H1 (cell line): ENCODE measurements at regions of chr12 and their contacts with region 1.

Region 1: GRCh38 chr12:89352492-89353187 is at the start of gene DUSP6:
- DNase-seq: peak; percentile 93 to 96
- H3K4me3 ChIP-seq: peak within 1 kb of the TSS; percentile 49 to 85 (median 83)
- H3K27ac ChIP-seq: peak within 1 kb of the TSS; percentile 82
- H3K4me1 ChIP-seq: peaks cover 19 to 27% (median 21%) of the 10 kb centered on the region in 4 experiments
- H3K27me3 ChIP-seq: peaks cover 8 to 54% (median 31%) of the 10 kb centered on the region in 4 experiments
- CTCF ChIP-seq: no peak
- EP300 ChIP-seq: peak; percentile 18 to 81; a peak in 2 of 3 replicates
- POLR2A ChIP-seq: peak; percentile 90 to 92
- RAD21 ChIP-seq: peak in 1 of 2 experiments; percentile 1; a peak in 2 of 4 replicates
- total RNA-seq, gene DUSP6: 152 and 179 TPM in 2 replicates

Region 2: GRCh38 chr12:89098441-89099112 is 254.1 kb before region 1 on chr12:
- CTCF ChIA-PET with region 1: interaction called, 3 read pairs
- POLR2A ChIA-PET with region 1: interaction called, 16 read pairs
- DNase-seq: peak; percentile 53 to 70
- H3K4me3 ChIP-seq: peak overlapping the region in 3 of 4 experiments; percentile 11 to 42 (median 19); a peak in 5 of 8 replicates
- H3K27ac ChIP-seq: 0 out of 2 replicates have a peak overlapping the region, but pooled peaks have one; percentile 5
- H3K4me1 ChIP-seq: peaks cover 7 to 27% (median 19%) of the 10 kb centered on the region in 4 experiments
- H3K27me3 ChIP-seq: no peaks in the 10 kb centered on the region
- CTCF ChIP-seq: no peak
- EP300 ChIP-seq: peak in 1 of 2 experiments; percentile 78; a peak in 2 of 3 replicates
- POLR2A ChIP-seq: no peak
- RAD21 ChIP-seq: peak in 1 of 2 experiments; percentile 22; a peak in 1 of 4 replicates

Region 3: DNA sequence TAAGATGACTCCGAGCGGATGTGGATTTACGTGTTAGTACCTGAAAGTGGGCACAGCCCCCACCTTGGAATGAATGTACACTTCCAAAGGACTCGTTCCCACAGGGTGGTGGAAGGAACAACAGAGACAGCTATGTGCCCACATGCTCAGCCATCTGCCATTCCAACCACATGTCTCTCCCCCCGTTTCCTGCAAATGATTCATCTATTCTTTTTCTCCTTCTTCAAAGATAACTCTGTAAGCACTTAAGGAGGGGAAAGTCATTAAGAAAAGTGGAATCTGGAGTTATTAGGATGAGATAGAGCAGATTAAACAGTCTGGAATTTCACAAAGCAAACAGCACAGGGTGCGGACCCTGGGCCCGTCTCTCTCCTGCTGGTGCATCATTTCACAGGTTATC is 18.2 kb after region 1 on chr12:
- CTCF ChIA-PET with region 1: interaction called, 5 read pairs
- POLR2A ChIA-PET with region 1: interaction called, 11 read pairs
- DNase-seq: no peak
- H3K4me3 ChIP-seq: no peak overlapping the region
- H3K27ac ChIP-seq: no peak overlapping the region
- H3K4me1 ChIP-seq: peaks cover 0 to 4% (median 0%) of the 10 kb centered on the region in 4 experiments; a peak in 1 of 7 replicates
- H3K27me3 ChIP-seq: no peaks in the 10 kb centered on the region
- CTCF ChIP-seq: no peak
- EP300 ChIP-seq: peak in 1 of 2 experiments; percentile 46; a peak in 1 of 3 replicates
- POLR2A ChIP-seq: no peak
- RAD21 ChIP-seq: no peak

Region 4: GRCh38 chr12:89393551-89394121 is 41.0 kb after region 1 on chr12:
- CTCF ChIA-PET with region 1: no interaction called
- POLR2A ChIA-PET with region 1: interaction called, 17 read pairs
- DNase-seq: no peak
- H3K4me3 ChIP-seq: no peak overlapping the region
- H3K27ac ChIP-seq: no peak overlapping the region
- H3K4me1 ChIP-seq: no peaks in the 10 kb centered on the region
- H3K27me3 ChIP-seq: no peaks in the 10 kb centered on the region
- CTCF ChIP-seq: no peak
- EP300 ChIP-seq: no peak
- POLR2A ChIP-seq: no peak
- RAD21 ChIP-seq: no peak

Region 5: GRCh38 chr12:89542912-89543592 is 190.4 kb after region 1 on chr12:
- CTCF ChIA-PET with region 1: no interaction called
- POLR2A ChIA-PET with region 1: no interaction called
- DNase-seq: peak; percentile 53 to 79
- H3K4me3 ChIP-seq: no peak overlapping the region
- H3K27ac ChIP-seq: no peak overlapping the region
- H3K4me1 ChIP-seq: no peaks in the 10 kb centered on the region; a peak in 1 of 7 replicates
- H3K27me3 ChIP-seq: no peaks in the 10 kb centered on the region
- CTCF ChIP-seq: peak; percentile 65 to 90 (median 77)
- EP300 ChIP-seq: no peak
- POLR2A ChIP-seq: no peak
- RAD21 ChIP-seq: peak; percentile 96 to 97

Region 6: DNA sequence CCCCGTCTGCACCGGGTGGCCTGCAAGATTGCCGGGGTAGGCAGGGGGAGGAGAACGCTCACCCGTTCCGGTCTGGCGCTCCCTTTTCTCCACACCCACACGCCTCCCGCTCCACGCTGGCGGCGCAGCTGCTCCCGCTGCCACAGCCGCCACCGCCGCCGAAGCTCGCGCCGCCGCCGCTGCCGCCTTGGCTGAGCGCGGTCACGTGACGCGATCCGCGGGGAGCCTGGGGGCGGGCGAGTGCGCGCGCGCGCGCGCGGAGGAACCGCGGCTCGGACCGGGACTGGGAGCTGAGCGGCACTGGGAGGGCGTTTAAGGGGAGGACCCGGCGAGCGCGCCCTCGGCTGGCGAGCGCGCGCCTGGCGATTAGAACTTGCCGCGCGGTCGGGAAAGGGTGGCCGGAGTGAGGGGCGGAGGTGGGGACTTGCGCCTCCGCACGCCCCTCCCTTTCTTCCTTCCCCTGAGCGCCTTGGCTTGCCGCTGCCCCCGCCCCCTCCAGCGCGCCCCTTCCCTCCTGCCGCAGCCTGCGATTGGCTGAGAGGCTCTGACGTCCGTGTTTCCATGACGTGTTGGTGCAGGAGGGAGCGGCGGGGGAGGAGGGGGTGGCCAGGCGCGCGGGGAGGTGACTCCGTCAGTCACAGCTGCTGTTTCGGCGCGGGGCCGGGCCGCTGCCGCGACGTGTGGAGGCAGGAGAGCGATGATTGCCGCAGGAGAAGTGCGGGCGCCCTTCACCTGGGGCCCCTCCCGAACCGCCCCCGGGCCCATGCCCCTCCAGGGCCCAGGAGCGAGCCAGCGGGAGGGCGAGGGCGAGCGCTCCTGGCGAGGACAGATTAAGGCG is 356.7 kb after region 1 on chr12:
- CTCF ChIA-PET with region 1: interaction called, 4 read pairs
- POLR2A ChIA-PET with region 1: interaction called, 13 read pairs
- DNase-seq: peak; percentile 95
- H3K4me3 ChIP-seq: peak overlapping the region; percentile 79 to 88 (median 87)
- H3K27ac ChIP-seq: peak overlapping the region; percentile 90
- H3K4me1 ChIP-seq: no peaks in the 10 kb centered on the region; a peak in 1 of 7 replicates
- H3K27me3 ChIP-seq: peaks cover 0 to 26% (median 13%) of the 10 kb centered on the region in 4 experiments; a peak in 5 of 7 replicates
- CTCF ChIP-seq: no peak
- EP300 ChIP-seq: no peak; a peak in 1 of 3 replicates
- POLR2A ChIP-seq: peak; percentile 67 to 90
- RAD21 ChIP-seq: no peak